Endothelial cell of umbilical vein (primary cell): ENCODE measurements at regions of chr17 and their contacts with region 1.

Region 1: GRCh38 chr17:17836250-17836817 is 452 bp downstream of the SREBF1 start:
- DNase-seq: peak; percentile 96
- H3K4me3 ChIP-seq: peak overlapping the region; percentile 54 to 89 (median 57)
- H3K27ac ChIP-seq: peak overlapping the region; percentile 95
- H3K4me1 ChIP-seq: peaks cover 53% of the 10 kb centered on the region
- H3K27me3 ChIP-seq: no peaks in the 10 kb centered on the region
- CTCF ChIP-seq: no peak
- POLR2A ChIP-seq: peak; percentile 96

Region 2: DNA sequence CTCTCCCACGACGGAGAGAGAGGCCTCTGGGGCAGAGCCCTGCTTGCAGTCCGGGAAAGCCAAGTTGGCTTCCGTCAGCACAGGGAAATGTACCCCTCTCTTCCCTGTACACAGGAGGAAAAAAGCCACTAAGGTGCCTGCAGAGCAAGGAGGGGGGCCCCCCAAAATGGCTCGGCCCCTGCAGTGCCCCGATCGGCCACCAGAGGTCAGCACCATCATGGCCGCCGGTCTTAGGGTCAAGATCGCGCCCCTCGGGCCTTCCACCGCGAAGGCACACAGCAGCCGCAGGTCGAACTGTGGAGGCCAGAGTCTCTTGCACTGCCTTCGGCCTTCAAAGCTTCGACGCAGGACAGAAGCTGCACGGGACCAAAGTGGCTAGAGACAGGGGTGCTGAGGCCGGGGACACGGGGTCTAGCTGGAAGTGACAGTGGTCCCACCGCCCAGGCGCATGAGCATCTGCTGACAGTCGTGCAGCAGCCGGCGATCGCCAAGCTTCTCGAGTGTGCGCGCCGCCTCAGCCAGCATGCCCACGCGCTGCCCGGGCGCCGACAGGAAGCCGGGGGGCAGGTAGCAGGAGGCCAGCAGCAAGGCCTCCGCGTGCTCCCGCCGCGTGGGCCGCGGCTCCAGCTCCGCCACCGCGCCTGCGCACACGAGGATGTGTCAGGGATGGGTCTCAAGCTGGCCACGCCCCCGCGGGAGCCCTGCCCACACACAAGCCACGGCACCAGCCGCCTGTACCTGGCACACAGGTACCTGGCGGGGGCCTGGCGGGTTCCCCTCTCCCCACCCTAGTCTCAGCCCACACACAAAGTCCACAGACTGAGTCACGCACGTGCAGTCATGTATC is 23.9 kb before region 1 on chr17:
- CTCF ChIA-PET with region 1: interaction called, 15 read pairs
- POLR2A ChIA-PET with region 1: interaction called, 4 read pairs
- dilution Hi-C with region 1: no loop called
- intact Hi-C with region 1: loop called (anchors 1 kb)
- DNase-seq: peak; percentile 68
- H3K4me3 ChIP-seq: no peak overlapping the region
- H3K27ac ChIP-seq: no peak overlapping the region
- H3K4me1 ChIP-seq: peaks cover 3% of the 10 kb centered on the region
- H3K27me3 ChIP-seq: no peaks in the 10 kb centered on the region
- CTCF ChIP-seq: peak; percentile 95 to 96
- POLR2A ChIP-seq: no peak

Region 3: DNA sequence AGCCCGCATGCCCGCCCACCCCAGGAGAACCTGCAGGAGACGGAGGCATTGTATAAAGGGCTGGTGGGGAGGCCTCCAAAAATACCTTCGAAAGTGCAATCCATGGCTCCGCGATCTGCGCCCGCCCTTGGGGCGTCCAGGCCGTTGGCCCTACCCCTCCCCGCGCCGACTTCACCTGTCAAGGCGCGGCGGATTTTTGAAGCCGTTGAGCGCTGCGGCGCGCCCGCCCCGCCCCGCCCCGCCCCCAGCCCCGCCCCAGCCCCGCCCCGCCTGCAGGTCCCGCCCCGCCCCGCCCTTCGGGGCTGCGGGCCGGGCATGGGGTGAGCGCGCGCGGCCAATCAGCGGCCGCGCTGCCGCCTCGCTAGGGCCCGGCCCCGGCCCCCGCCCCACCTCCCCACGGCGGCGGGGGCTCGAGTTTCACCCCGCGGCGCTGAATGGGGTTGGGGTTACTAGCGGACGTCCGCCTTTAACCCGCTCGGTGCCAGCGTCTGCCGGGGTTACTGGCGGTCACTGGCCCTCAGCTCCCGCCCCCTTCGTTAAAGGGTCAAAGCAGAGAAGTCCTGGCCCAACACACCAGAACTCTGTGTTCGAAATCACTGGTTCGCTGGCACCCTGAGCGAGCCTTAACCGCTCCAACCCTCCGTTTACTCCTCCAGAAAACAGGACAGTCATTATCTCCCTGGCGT is 12.8 kb before region 1 on chr17:
- CTCF ChIA-PET with region 1: interaction called, 5 read pairs
- POLR2A ChIA-PET with region 1: no interaction called
- dilution Hi-C with region 1: no loop called
- intact Hi-C with region 1: loop called (anchors 1 kb)
- DNase-seq: peak; percentile 68
- H3K4me3 ChIP-seq: peak overlapping the region in 1 of 3 experiments; percentile 22
- H3K27ac ChIP-seq: peak overlapping the region; percentile 53
- H3K4me1 ChIP-seq: peaks cover 34% of the 10 kb centered on the region
- H3K27me3 ChIP-seq: no peaks in the 10 kb centered on the region
- CTCF ChIP-seq: no peak
- POLR2A ChIP-seq: no peak

Region 4: DNA sequence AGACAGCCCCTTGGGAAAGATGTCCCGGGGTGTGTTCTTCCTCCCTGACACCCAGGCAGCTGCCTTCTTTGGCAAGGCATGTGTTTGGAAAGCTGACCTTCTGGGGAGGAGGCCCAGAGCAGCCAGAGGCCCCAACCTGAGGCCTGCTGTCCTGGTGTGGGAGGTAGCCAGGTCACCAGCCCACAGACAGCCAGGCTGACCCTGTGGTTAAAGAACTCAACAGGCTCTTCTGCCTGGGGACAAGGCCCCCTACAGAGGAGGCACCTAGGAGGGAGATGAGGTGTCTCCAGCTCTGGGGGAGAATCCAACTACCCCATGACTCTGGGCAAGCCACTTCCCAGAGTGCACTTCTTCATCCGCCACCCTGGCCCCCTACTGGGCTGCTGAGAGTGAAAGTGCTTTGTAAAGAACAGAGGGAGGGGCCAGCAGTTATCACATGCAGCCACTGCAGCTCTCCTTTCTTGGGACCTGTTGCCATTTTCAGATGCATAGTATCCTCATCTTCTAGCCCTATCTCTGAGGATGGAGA is 13.6 kb after region 1 on chr17:
- CTCF ChIA-PET with region 1: interaction called, 5 read pairs
- POLR2A ChIA-PET with region 1: interaction called, 5 read pairs
- dilution Hi-C with region 1: no loop called
- intact Hi-C with region 1: loop called (anchors 1 kb)
- DNase-seq: peak; percentile 46
- H3K4me3 ChIP-seq: no peak overlapping the region
- H3K27ac ChIP-seq: no peak overlapping the region
- H3K4me1 ChIP-seq: peaks cover 7% of the 10 kb centered on the region
- H3K27me3 ChIP-seq: no peaks in the 10 kb centered on the region
- CTCF ChIP-seq: peak; percentile 23 to 38
- POLR2A ChIP-seq: no peak

Region 5: DNA sequence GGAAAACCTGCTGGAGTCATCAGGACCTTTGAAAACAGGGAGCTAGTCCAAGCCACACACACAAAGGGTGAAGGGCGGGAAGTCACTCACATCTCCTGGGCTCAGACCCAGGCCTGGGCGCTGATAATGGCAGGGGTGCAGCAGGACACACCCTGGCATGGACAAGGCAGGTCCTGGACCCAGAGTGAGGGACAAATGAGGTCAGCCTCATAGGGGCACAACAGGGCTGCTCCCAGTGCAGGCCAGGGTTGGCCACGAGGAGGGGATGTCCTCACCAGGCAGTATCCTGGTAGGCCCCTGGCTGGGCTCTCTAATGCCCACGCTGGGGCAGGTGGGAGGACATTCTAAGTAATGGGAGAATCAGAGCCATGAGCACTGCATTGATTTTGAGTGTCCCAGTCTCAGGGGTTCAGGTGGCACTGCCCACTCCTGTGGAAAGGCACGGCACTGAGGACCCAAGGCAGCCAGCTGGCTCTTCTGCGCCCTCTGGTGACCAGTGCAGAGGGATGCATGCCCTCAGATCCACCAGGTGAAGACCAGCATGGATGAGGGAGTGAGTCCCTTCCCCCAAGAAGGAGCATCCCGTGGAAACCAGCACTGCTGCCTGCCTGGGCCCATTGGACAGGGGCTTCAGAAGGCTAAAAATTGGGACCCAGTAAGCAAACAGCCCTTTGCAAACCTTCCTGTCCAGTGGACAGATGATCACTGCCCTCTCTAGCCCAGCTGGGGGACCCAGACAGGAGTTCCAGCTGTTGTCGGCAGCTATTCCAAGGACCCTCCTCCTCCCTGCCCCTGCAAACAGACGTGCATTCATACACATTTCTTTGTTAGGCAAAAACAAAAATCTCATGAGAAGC is 23.8 kb after region 1 on chr17:
- CTCF ChIA-PET with region 1: interaction called, 18 read pairs
- POLR2A ChIA-PET with region 1: no interaction called
- dilution Hi-C with region 1: no loop called
- intact Hi-C with region 1: no loop called
- DNase-seq: peak; percentile 59
- H3K4me3 ChIP-seq: no peak overlapping the region
- H3K27ac ChIP-seq: no peak overlapping the region
- H3K4me1 ChIP-seq: no peaks in the 10 kb centered on the region
- H3K27me3 ChIP-seq: no peaks in the 10 kb centered on the region
- CTCF ChIP-seq: peak; percentile 88 to 97
- POLR2A ChIP-seq: no peak

Region 6: GRCh38 chr17:18076936-18077335 is 240.6 kb after region 1 on chr17:
- CTCF ChIA-PET with region 1: no interaction called
- POLR2A ChIA-PET with region 1: no interaction called
- dilution Hi-C with region 1: no loop called
- intact Hi-C with region 1: no loop called
- DNase-seq: no peak
- H3K4me3 ChIP-seq: no peak overlapping the region
- H3K27ac ChIP-seq: no peak overlapping the region
- H3K4me1 ChIP-seq: no peaks in the 10 kb centered on the region
- H3K27me3 ChIP-seq: peaks cover 5 to 10% of the 10 kb centered on the region in 2 experiments
- CTCF ChIP-seq: no peak
- POLR2A ChIP-seq: no peak